ENCODE measurements at regions of chr2 and their contacts with region 1.

Region 1: GRCh38 chr2:27747827-27748352 is 23.6 kb upstream of the MRPL33 start:
- DNase-seq: no peak
- ATAC-seq: peak in 3 of 4 donors; percentile 84 to 88 (median 85)
- H3K4me3 ChIP-seq: no peak overlapping the region
- H3K27ac ChIP-seq: no peak overlapping the region
- H3K4me1 ChIP-seq: peaks cover 0 to 11% (median 0%) of the 10 kb centered on the region in 12 donors
- H3K27me3 ChIP-seq: no peaks in the 10 kb centered on the region
- CTCF ChIP-seq: no peak
- POLR2A ChIP-seq: no peak

Region 2: DNA sequence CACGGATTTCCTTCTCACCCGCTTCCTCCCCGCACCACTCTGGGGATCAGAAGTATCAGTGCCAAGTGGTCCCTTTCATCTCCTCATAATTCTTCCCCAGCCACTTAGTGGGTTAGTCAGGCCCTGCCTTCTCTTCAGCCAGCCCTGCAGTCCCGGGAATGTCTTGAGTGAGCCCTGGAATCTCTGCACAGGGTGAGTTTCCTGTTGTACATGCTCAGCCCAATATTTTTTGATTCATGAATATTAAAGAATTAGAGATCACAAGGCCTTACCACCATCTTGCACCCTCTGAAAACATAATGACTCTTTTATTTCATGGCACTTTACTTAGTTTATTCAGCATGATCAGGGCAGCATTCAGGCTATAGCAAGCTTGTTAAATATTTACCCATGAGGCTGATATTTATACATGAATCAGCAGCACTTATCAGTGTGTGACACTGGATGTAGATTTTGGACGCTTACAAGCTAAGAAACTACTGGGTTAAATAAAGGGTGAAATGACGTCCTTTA is 485.3 kb after region 1 on chr2:
- intact Hi-C with region 1: loop called in 1 of 10 experiments (anchors 5 kb)
- DNase-seq: no peak
- ATAC-seq: no peak
- H3K4me3 ChIP-seq: no peak overlapping the region
- H3K27ac ChIP-seq: peak overlapping the region in 1 of 12 donors; percentile 20
- H3K4me1 ChIP-seq: peaks cover 0 to 25% (median 3%) of the 10 kb centered on the region in 12 donors
- H3K27me3 ChIP-seq: no peaks in the 10 kb centered on the region
- CTCF ChIP-seq: no peak
- POLR2A ChIP-seq: no peak

Region 3: GRCh38 chr2:28269019-28269784 is 521.3 kb after region 1 on chr2:
- intact Hi-C with region 1: no loop called
- DNase-seq: peak in 1 of 5 donors; percentile 36
- ATAC-seq: peak; percentile 63 to 75 (median 70)
- H3K4me3 ChIP-seq: no peak overlapping the region
- H3K27ac ChIP-seq: peak overlapping the region in 10 of 12 donors; percentile 6 to 58 (median 42)
- H3K4me1 ChIP-seq: peaks cover 3 to 43% (median 20%) of the 10 kb centered on the region in 12 donors
- H3K27me3 ChIP-seq: no peaks in the 10 kb centered on the region
- CTCF ChIP-seq: no peak
- POLR2A ChIP-seq: no peak